ENCODE measurements at regions of chr1 and their contacts with region 1.

Region 1: DNA sequence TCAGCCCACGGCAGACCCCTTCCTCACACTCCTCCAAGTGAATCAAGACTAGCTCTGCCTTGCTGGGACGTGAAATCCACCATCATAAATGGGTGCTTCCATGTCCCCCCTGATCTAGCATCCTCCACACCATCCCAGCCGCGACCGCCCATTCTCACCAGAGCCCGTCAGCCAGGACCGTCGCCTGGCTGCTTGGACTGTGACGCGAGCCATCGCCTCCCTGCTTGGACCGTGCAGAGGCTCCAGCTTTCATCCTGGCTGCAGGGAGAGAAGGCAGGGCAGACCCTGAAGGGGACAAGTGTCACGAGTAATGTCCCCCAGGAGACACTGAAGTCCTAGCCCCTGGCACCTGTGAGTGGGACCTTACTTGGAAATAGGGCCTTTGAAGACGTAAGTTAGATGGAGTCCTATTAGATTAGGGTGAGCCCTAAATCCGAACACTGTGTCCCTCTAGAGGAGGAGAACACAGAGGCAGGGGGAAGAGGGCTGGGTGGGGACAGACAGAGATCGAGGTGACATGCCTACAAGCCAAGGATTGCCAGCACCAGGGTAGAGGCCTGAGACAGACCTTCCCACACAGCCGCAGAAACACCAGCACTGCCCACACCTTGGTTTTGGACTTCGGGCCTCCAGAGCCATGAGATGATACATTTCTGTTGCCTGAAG is 12.8 kb upstream of the PRKCZ start:
- DNase-seq: no peak
- ATAC-seq: no peak
- H3K4me3 ChIP-seq: no peak overlapping the region
- H3K27ac ChIP-seq: no peak overlapping the region
- H3K4me1 ChIP-seq: no peaks in the 10 kb centered on the region
- H3K27me3 ChIP-seq: peaks cover 0 to 17% (median 5%) of the 10 kb centered on the region in 3 donors
- CTCF ChIP-seq: no peak
- POLR2A ChIP-seq: no peak

Region 2: GRCh38 chr1:1954831-1955441 is 82.5 kb before region 1 on chr1:
- in situ Hi-C with region 1: loop called in 1 of 4 experiments (anchors 5 kb)
- intact Hi-C with region 1: no loop called
- DNase-seq: no peak
- ATAC-seq: no peak
- H3K4me3 ChIP-seq: no peak overlapping the region
- H3K27ac ChIP-seq: no peak overlapping the region
- H3K4me1 ChIP-seq: no peaks in the 10 kb centered on the region
- H3K27me3 ChIP-seq: peaks cover 20 to 42% (median 30%) of the 10 kb centered on the region in 3 donors
- CTCF ChIP-seq: no peak
- POLR2A ChIP-seq: no peak

Region 3: DNA sequence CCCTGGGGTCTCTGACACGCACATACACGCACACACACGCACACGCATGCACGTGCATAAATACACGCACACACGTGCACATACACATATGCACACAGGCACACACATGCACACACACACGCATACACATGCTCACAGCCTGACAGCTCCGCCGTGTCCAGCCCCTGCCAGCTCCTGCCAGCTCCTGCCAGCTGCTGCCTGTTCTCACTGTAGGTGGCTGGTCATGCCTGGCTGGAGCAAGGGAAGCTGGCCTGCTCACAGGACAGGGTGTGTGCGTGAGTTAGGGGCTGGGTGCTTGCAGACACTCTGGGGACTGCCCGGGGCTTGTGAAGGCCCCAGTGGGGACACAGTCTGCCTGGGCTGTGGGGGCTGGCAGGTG is 443.5 kb after region 1 on chr1:
- in situ Hi-C with region 1: no loop called
- intact Hi-C with region 1: no loop called
- DNase-seq: no peak
- ATAC-seq: no peak
- H3K4me3 ChIP-seq: no peak overlapping the region
- H3K27ac ChIP-seq: no peak overlapping the region
- H3K4me1 ChIP-seq: no peaks in the 10 kb centered on the region
- H3K27me3 ChIP-seq: no peaks in the 10 kb centered on the region
- CTCF ChIP-seq: no peak
- POLR2A ChIP-seq: no peak

Measured in gastrocnemius medialis (tissue), 4 donors.